CD8-positive, alpha-beta memory T cell (primary cell): ENCODE measurements at regions of chr1 and their contacts with region 1.

Region 1: GRCh38 chr1:156383023-156383422 is 14.0 kb downstream of the RHBG start:
- DNase-seq: peak; percentile 37 to 73 (median 40)
- H3K4me3 ChIP-seq: no peak overlapping the region
- H3K4me3 Mint-ChIP-seq: no peak overlapping the region
- H3K27ac ChIP-seq: no peak overlapping the region
- H3K27ac Mint-ChIP-seq: no peak overlapping the region
- H3K4me1 ChIP-seq: peaks cover 6% of the 10 kb centered on the region
- H3K4me1 Mint-ChIP-seq: peaks cover 6 to 7% (median 7%) of the 10 kb centered on the region in 3 donors
- H3K27me3 ChIP-seq: no peaks in the 10 kb centered on the region
- H3K27me3 Mint-ChIP-seq: peaks cover 4 to 17% of the 10 kb centered on the region in 2 donors

Region 2: DNA sequence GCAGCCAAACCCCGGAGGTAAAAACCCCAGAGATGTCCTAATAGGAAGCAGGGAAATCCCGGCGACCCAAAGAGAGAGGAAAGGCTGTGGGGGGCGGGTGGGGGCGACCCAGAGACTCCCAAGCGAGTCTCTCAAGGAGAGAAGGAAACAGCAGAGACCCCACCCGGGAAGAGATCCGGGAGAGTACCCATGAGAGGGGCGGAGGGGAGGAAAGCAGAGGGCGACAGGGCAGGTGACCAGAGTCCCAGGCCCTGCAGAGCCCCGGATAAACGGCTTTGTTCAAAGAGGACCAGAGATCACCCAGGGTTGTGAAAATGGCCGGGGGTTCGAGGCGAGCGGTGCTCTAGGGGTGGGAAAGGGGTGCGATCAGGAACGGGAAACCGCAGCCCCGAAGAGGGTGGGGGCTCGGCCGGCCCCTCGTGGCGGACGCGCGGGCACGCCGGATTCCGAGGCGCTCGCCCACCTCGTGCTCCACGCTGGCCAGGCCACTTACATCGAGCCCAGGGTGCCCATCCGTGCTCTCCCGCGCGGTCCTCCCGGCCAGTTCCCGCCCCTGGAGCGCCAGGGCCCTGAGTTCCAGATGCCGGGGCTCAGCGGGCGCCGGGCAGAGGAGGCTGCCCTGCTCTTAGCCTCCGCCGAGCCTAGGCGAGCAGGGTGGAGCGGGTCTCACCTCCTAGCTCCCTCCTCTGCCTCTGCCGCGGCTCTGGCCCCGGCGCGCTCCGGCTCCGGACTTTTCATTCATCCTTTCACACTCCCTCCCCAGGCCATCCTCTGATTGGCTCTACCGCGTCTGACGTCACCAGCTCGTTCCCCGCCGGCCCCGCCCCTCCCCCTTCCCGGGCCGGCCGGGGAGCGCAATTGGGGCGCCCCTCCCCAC is 38.3 kb after region 1 on chr1:
- CTCF ChIA-PET with region 1: interaction called, 31 read pairs
- POLR2A ChIA-PET with region 1: interaction called, 3 read pairs
- DNase-seq: peak; percentile 54 to 74 (median 63)
- H3K4me3 ChIP-seq: peak overlapping the region; percentile 62
- H3K4me3 Mint-ChIP-seq: peak overlapping the region; percentile 91 to 97 (median 93)
- H3K27ac ChIP-seq: peak overlapping the region; percentile 68
- H3K27ac Mint-ChIP-seq: peak overlapping the region in 6 of 8 donors; percentile 9 to 92 (median 72)
- H3K4me1 ChIP-seq: peaks cover 25% of the 10 kb centered on the region
- H3K4me1 Mint-ChIP-seq: peaks cover 23 to 35% (median 26%) of the 10 kb centered on the region in 3 donors
- H3K27me3 ChIP-seq: peaks cover 46% of the 10 kb centered on the region
- H3K27me3 Mint-ChIP-seq: peaks cover 15 to 75% of the 10 kb centered on the region in 2 donors

Region 3: DNA sequence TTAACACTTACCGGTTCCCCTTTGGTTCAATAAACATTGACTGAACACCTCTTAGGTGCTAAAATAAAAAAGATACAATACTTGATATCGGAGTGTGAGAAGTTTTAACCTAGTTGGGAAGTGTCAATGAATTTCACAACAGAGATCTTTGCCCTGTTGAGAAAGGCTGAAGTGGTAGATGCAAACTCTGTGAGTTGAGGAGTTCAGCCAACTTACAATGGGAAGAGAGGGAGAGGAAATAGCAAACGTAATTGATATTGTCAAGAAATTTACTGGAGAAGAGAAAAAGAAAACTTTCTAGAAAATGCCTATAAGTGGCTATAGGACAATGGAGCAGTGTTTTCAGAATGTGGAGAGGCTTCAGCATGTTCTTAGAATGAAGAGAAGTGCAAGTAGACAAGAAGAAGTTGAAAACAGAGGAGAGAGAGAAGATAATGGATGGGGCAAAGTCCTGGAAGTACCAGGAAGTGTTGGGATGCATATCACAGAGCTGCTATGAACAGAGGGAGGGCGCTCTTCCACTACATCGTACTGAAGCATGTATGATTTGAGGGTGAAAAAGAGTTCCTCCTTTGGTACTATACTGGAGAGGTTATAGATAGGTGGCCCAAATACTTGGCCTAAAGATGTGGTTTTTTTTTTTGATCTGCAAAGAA is 68.6 kb after region 1 on chr1:
- CTCF ChIA-PET with region 1: interaction called, 185 read pairs
- POLR2A ChIA-PET with region 1: interaction called, 10 read pairs
- DNase-seq: no peak
- H3K4me3 ChIP-seq: no peak overlapping the region
- H3K4me3 Mint-ChIP-seq: peak overlapping the region in 1 of 7 donors; percentile 44
- H3K27ac ChIP-seq: no peak overlapping the region
- H3K27ac Mint-ChIP-seq: no peak overlapping the region
- H3K4me1 ChIP-seq: peaks cover 5% of the 10 kb centered on the region
- H3K4me1 Mint-ChIP-seq: peaks cover 5 to 6% (median 6%) of the 10 kb centered on the region in 3 donors
- H3K27me3 ChIP-seq: peaks cover 3% of the 10 kb centered on the region
- H3K27me3 Mint-ChIP-seq: peaks cover 6 to 14% of the 10 kb centered on the region in 2 donors

Region 4: GRCh38 chr1:156560585-156561183 is 177.7 kb after region 1 on chr1:
- CTCF ChIA-PET with region 1: no interaction called
- POLR2A ChIA-PET with region 1: no interaction called
- DNase-seq: no peak
- H3K4me3 ChIP-seq: no peak overlapping the region
- H3K4me3 Mint-ChIP-seq: no peak overlapping the region
- H3K27ac ChIP-seq: no peak overlapping the region
- H3K27ac Mint-ChIP-seq: peak overlapping the region in 1 of 8 donors; percentile 52
- H3K4me1 ChIP-seq: no peaks in the 10 kb centered on the region
- H3K4me1 Mint-ChIP-seq: no peaks in the 10 kb centered on the region
- H3K27me3 ChIP-seq: no peaks in the 10 kb centered on the region
- H3K27me3 Mint-ChIP-seq: no peaks in the 10 kb centered on the region

Region 5: DNA sequence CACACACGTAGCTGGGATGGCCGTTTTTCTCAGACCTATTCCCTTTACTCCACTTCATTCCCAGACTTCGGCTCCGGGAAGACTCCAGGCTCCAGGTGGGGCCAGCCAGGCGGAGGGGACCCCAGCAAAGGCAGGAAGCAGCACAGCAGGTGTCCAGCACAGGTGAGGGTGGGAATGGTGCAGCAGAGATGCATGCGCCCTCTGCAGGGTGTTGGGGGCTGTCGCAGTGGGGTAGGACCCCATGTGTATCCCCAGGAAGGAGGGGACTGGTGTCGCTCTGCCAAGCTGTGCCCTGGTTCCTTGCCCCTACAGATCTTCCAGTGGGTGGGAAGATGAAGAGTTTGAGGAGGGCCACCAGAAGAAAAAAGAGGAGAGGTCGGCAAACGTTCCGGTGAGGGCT is 201.8 kb after region 1 on chr1:
- CTCF ChIA-PET with region 1: interaction called, 11 read pairs
- POLR2A ChIA-PET with region 1: no interaction called
- DNase-seq: no peak
- H3K4me3 ChIP-seq: no peak overlapping the region
- H3K4me3 Mint-ChIP-seq: peak overlapping the region in 1 of 7 donors; percentile 46
- H3K27ac ChIP-seq: no peak overlapping the region
- H3K27ac Mint-ChIP-seq: no peak overlapping the region
- H3K4me1 ChIP-seq: peaks cover 30% of the 10 kb centered on the region
- H3K4me1 Mint-ChIP-seq: peaks cover 27 to 38% (median 33%) of the 10 kb centered on the region in 3 donors
- H3K27me3 ChIP-seq: no peaks in the 10 kb centered on the region
- H3K27me3 Mint-ChIP-seq: peaks cover 0 to 1% of the 10 kb centered on the region in 2 donors

Region 6: GRCh38 chr1:156601122-156601830 is 218.3 kb after region 1 on chr1 and contains the start of gene GPATCH4:
- CTCF ChIA-PET with region 1: interaction called, 12 read pairs
- POLR2A ChIA-PET with region 1: no interaction called
- DNase-seq: peak; percentile 58 to 81 (median 70)
- H3K4me3 ChIP-seq: peak within 1 kb of the TSS; percentile 97
- H3K4me3 Mint-ChIP-seq: peak within 1 kb of the TSS; percentile 84 to 100 (median 95)
- H3K27ac ChIP-seq: peak within 1 kb of the TSS; percentile 68
- H3K27ac Mint-ChIP-seq: peak within 1 kb of the TSS; percentile 72 to 100 (median 98)
- H3K4me1 ChIP-seq: peaks cover 32% of the 10 kb centered on the region
- H3K4me1 Mint-ChIP-seq: peaks cover 34 to 36% (median 35%) of the 10 kb centered on the region in 3 donors
- H3K27me3 ChIP-seq: no peaks in the 10 kb centered on the region
- H3K27me3 Mint-ChIP-seq: no peaks in the 10 kb centered on the region
- total RNA-seq, gene GPATCH4: 123 to 131 TPM

Region 7: DNA sequence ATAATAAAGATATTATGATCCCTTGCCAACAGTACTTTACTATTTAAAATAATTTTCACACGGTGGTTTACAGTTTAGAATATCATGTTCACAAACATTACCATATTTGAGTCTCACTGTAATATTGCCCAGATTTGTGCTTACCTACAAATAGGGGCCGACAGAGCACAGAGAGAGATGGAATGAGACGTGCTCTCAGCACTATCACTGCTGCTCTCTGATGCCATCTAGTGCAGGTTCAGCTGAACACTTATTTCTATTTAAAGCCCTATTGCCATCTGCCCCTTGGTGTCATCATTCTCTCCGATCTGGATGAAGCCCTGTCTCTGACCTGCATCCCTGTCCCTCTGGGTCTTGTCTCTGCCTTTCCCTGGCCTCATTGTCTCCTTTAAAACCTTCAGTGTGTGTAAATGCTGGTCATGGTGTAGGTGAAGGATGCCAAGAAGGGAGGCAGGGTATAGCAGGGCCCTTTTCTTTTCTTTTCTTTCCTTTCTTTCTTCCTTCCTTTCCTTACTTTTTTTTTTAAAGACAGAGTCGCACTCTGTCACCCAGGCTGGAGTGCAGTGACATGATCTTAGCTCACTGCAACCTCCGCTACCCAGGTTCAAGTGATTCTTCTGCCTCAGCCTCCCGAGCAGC is 225.1 kb after region 1 on chr1:
- CTCF ChIA-PET with region 1: interaction called, 16 read pairs
- POLR2A ChIA-PET with region 1: no interaction called
- DNase-seq: peak; percentile 32 to 73 (median 62)
- H3K4me3 ChIP-seq: no peak overlapping the region
- H3K4me3 Mint-ChIP-seq: peak overlapping the region in 2 of 7 donors; percentile 25 to 41
- H3K27ac ChIP-seq: no peak overlapping the region
- H3K27ac Mint-ChIP-seq: no peak overlapping the region
- H3K4me1 ChIP-seq: peaks cover 10% of the 10 kb centered on the region
- H3K4me1 Mint-ChIP-seq: peaks cover 6 to 15% (median 9%) of the 10 kb centered on the region in 3 donors
- H3K27me3 ChIP-seq: no peaks in the 10 kb centered on the region
- H3K27me3 Mint-ChIP-seq: peaks cover 5 to 26% of the 10 kb centered on the region in 2 donors

Region 8: DNA sequence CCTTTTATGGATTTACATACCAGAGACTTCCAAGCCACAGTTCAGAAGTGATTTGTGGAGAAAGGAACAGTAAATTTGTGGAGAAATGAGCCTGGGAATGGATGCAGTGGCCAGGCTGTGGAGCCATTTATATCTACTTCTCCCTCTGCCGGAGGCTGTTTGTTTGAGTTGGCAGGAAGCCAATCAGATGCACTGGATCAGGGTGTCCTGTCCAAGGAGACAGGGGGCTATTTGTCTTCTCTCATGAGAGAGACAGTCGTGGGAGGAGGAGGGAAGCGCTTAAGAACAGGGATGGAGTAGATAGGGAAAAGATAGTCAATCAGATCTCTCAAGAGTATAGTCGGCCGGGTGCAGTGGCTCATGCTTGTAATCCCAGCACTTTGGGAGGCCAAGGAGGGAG is 233.4 kb after region 1 on chr1:
- CTCF ChIA-PET with region 1: interaction called, 14 read pairs
- POLR2A ChIA-PET with region 1: no interaction called
- DNase-seq: no peak
- H3K4me3 ChIP-seq: no peak overlapping the region
- H3K4me3 Mint-ChIP-seq: no peak overlapping the region
- H3K27ac ChIP-seq: no peak overlapping the region
- H3K27ac Mint-ChIP-seq: no peak overlapping the region
- H3K4me1 ChIP-seq: no peaks in the 10 kb centered on the region
- H3K4me1 Mint-ChIP-seq: no peaks in the 10 kb centered on the region
- H3K27me3 ChIP-seq: peaks cover 7% of the 10 kb centered on the region
- H3K27me3 Mint-ChIP-seq: peaks cover 26 to 59% of the 10 kb centered on the region in 2 donors